ENCODE measurements at regions of chr7 and their contacts with region 1.

Region 1: DNA sequence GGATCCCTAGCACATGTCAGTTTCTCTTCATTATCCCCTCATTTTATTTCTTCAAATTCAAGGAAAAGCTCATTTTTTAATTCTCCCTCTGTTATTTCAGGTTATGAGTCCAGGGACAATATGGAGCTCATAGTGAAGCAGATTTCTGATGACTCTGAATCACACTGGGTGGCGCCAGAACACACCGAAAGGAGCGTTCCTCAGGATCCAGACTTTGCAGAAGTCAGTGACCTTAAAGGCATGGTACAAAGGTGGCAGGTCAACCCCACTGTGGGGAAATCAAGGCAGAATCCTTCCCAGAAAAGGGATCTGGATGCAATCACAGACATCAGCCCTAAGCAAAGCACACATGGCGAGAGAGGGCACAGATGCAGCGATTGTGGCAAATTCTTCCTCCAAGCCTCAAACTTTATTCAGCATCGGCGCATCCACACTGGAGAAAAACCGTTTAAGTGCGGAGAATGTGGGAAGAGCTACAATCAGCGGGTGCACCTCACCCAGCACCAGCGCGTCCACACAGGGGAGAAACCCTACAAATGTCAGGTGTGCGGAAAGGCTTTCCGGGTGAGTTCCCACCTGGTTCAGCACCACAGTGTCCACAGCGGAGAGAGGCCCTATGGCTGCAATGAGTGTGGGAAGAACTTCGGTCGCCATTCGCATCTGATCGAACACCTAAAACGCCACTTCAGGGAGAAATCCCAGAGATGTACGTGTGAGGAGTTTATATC is 21.4 kb downstream of the ZKSCAN5 start:
- DNase-seq: peak in 5 of 9 experiments; percentile 16 to 44 (median 29)
- ATAC-seq: no peak
- H3K4me3 ChIP-seq: no peak overlapping the region
- H3K4me3 Mint-ChIP-seq: no peak overlapping the region
- H3K27ac ChIP-seq: no peak overlapping the region
- H3K27ac Mint-ChIP-seq: peak overlapping the region; percentile 42
- H3K4me1 ChIP-seq: no peaks in the 10 kb centered on the region
- H3K4me1 Mint-ChIP-seq: no peaks in the 10 kb centered on the region
- H3K27me3 ChIP-seq: no peaks in the 10 kb centered on the region
- H3K27me3 Mint-ChIP-seq: no peaks in the 10 kb centered on the region
- CTCF ChIP-seq: no peak

Region 2: GRCh38 chr7:99837649-99838361 is 311.9 kb after region 1 on chr7:
- CTCF ChIA-PET with region 1: no interaction called
- POLR2A ChIA-PET with region 1: no interaction called
- intact Hi-C with region 1: loop called in 1 of 2 experiments (anchors 5 kb)
- DNase-seq: peak in 2 of 9 experiments; percentile 8 to 27
- ATAC-seq: no peak
- H3K4me3 ChIP-seq: no peak overlapping the region
- H3K4me3 Mint-ChIP-seq: no peak overlapping the region
- H3K27ac ChIP-seq: no peak overlapping the region
- H3K27ac Mint-ChIP-seq: no peak overlapping the region
- H3K4me1 ChIP-seq: no peaks in the 10 kb centered on the region
- H3K4me1 Mint-ChIP-seq: peaks cover 3% of the 10 kb centered on the region
- H3K27me3 ChIP-seq: no peaks in the 10 kb centered on the region
- H3K27me3 Mint-ChIP-seq: peaks cover 2% of the 10 kb centered on the region
- CTCF ChIP-seq: no peak

Region 3: GRCh38 chr7:100177045-100178001 is 651.4 kb after region 1 on chr7 and contains the starts of genes GPC2 and STAG3:
- CTCF ChIA-PET with region 1: no interaction called
- POLR2A ChIA-PET with region 1: no interaction called
- intact Hi-C with region 1: no loop called
- DNase-seq: peak; percentile 89 to 98 (median 97)
- ATAC-seq: peak; percentile 92
- H3K4me3 ChIP-seq: peak within 1 kb of the TSS; percentile 52 to 61
- H3K4me3 Mint-ChIP-seq: peak within 1 kb of the TSS; percentile 74
- H3K27ac ChIP-seq: peak within 1 kb of the TSS in 1 of 2 experiments; percentile 6
- H3K27ac Mint-ChIP-seq: peak within 1 kb of the TSS; percentile 80
- H3K4me1 ChIP-seq: peaks cover 33% of the 10 kb centered on the region
- H3K4me1 Mint-ChIP-seq: peaks cover 43% of the 10 kb centered on the region
- H3K27me3 ChIP-seq: peaks cover 0 to under 1% of the 10 kb centered on the region in 2 experiments
- H3K27me3 Mint-ChIP-seq: no peaks in the 10 kb centered on the region
- CTCF ChIP-seq: no peak
- total RNA-seq, gene GPC2: 10.5 to 13.3 TPM
- total RNA-seq, gene STAG3: 6.3 to 6.6 TPM

Measured in CD8-positive, alpha-beta T cell (primary cell).